ENCODE measurements at regions of chr6 and their contacts with region 1.

Region 1: DNA sequence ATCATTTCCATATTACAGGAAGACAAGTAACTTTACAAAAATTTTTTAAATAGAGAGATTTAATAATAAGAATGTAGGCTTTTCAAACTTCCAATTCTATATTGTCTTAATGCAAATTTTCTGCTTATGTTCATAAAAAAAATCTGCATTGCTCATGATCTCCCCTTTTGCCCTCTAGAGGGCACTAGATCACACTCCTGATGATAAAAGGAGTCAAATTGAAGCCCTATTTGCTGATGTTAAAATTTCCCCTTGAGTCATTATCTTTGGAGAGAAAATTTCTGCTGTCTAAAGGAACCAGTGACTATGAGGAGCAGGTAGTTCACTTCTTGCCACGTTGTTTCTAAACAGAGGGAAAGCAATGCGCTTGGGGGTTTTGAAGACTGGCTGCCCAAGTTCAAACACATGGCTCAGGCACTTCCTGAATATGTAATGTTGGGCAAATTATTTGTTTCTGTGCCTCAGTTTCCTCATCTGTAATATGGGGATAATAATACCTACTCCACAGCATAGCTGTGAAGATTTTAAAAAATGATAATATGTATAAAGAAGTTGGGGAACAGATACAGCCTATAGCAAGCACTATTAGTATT is 874.2 kb downstream of the TFAP2A start:
- DNase-seq: peak; percentile 67
- ATAC-seq: peak; percentile 62
- H3K4me3 ChIP-seq: no peak overlapping the region
- H3K27ac ChIP-seq: no peak overlapping the region
- H3K4me1 ChIP-seq: no peaks in the 10 kb centered on the region
- H3K27me3 ChIP-seq: no peaks in the 10 kb centered on the region
- CTCF ChIP-seq: peak; percentile 66
- POLR2A ChIP-seq: no peak
- RAD21 ChIP-seq: peak; percentile 67

Region 2: DNA sequence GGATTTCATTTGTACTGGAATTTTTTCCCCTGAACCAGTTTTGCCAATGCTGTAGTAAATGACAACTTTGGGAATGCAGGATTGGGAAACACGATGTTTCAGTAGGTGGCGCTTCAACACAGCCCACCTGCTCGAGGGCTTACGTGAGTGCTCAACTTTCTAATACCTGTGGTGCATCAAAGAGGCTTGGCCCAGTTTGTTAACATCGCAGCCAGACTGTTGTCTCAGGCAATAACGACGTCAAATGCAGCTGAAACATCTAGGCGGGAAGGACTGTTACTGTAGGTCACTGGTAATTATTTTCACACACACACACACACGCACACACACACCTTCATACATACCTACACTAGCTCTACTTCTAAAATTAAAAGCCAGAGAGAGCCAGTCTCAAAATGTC is 289.8 kb before region 1 on chr6:
- CTCF ChIA-PET with region 1: no interaction called
- POLR2A ChIA-PET with region 1: no interaction called
- dilution Hi-C with region 1: no loop called
- in situ Hi-C with region 1: no loop called
- intact Hi-C with region 1: loop called (anchors 5 kb)
- DNase-seq: peak; percentile 53
- ATAC-seq: peak; percentile 59
- H3K4me3 ChIP-seq: no peak overlapping the region
- H3K27ac ChIP-seq: no peak overlapping the region
- H3K4me1 ChIP-seq: no peaks in the 10 kb centered on the region
- H3K27me3 ChIP-seq: no peaks in the 10 kb centered on the region
- CTCF ChIP-seq: peak; percentile 55
- POLR2A ChIP-seq: no peak
- RAD21 ChIP-seq: peak; percentile 80

Region 3: DNA sequence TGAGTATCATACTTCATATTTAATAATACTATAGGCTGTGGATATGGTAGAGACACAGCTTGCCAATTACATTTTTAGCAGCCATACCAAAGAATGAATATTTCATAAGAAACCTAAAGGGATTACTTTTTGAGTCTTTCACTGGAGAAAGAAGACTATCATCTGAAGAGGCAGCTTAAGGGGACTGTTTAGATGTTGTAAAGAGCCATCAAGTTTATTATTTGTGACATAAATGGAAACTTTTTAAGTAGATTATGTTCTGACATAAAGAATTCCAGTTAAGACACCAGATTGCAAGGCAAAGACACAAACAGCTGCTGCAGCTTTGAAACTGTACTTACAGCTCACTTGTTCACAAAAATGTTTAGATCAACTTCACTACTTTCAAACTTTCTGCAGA is 444.9 kb after region 1 on chr6:
- CTCF ChIA-PET with region 1: no interaction called
- POLR2A ChIA-PET with region 1: no interaction called
- dilution Hi-C with region 1: no loop called
- in situ Hi-C with region 1: no loop called
- intact Hi-C with region 1: loop called (anchors 10 kb)
- DNase-seq: no peak
- ATAC-seq: no peak
- H3K4me3 ChIP-seq: no peak overlapping the region
- H3K27ac ChIP-seq: no peak overlapping the region
- H3K4me1 ChIP-seq: no peaks in the 10 kb centered on the region
- H3K27me3 ChIP-seq: no peaks in the 10 kb centered on the region
- CTCF ChIP-seq: no peak
- POLR2A ChIP-seq: no peak
- RAD21 ChIP-seq: no peak

Region 4: DNA sequence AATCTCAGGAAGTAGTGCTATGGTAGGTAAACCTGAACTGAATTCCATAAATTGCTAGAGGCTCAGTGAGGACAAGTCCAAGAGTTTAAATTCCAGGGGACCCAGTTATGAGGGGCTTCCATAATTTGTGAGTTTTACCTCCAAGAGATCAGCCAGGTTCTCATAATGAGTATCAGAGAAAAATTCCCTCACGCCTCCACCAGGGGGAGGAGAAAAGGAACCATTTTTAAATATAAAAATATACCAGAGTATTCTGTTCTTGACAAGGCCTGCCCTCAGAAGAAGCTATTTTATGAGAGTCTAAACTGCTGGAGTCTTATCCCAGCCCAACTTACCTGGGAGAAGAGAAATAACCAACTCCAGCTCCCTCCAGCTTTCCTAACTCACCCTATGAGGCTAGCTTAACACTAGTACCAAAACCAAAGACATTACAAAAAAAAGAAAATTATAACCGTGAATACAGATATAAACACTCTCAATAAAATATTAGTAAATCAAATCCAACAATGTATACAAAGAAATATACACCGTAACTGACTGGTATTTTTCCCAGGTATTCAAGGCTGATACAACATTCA is 715.6 kb after region 1 on chr6:
- CTCF ChIA-PET with region 1: no interaction called
- POLR2A ChIA-PET with region 1: no interaction called
- dilution Hi-C with region 1: no loop called
- in situ Hi-C with region 1: no loop called
- intact Hi-C with region 1: loop called (anchors 10 kb)
- DNase-seq: no peak
- ATAC-seq: peak; percentile 46; the same call in 1 of the 2 replicates
- H3K4me3 ChIP-seq: no peak overlapping the region
- H3K27ac ChIP-seq: no peak overlapping the region
- H3K4me1 ChIP-seq: no peaks in the 10 kb centered on the region
- H3K27me3 ChIP-seq: no peaks in the 10 kb centered on the region
- CTCF ChIP-seq: peak; percentile 34
- POLR2A ChIP-seq: no peak
- RAD21 ChIP-seq: no peak

Region 5: DNA sequence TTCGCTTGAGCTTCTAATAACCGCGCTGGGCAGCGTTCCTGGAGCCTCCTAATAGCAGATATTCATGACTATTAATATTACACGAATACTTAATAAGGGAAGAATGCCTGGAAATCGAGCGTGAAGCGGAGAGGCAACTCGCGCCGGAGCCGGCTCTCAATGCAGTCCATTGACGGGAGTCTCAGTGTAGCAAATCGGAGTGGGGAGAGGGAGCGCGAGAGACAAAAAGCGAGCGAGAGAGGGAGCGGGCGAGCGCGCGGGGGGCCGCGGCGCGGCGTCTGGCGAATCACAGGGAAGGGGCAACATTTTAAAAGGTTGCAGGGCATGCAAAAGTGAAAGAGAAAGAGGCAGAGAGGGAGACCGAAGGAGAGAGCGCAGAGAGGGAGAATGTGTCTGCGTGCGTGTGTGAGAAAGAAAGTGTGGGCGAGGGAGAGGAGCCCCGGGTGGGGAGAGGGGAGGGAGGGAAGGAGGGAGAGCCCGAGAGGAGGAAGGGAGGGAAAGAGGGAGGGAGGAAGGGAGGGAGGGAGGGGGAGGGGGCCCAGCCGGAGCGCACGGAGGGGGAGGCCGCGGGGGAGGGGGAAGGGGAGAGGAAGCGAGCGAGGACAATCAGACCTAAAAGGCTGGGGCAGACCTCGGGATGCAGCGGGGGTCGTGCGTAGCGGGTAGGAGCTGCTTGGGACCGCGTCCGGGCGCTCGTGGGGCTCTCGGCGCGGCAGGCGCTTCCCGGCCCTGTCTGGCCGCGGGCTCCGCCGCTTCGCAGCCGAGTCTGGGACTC is 871.5 kb after region 1 on chr6:
- CTCF ChIA-PET with region 1: no interaction called
- POLR2A ChIA-PET with region 1: no interaction called
- dilution Hi-C with region 1: no loop called
- in situ Hi-C with region 1: loop called (anchors 25 kb)
- intact Hi-C with region 1: loop called (anchors 5 kb)
- DNase-seq: peak; percentile 75
- ATAC-seq: peak; percentile 50
- H3K4me3 ChIP-seq: peak overlapping the region; percentile 67
- H3K27ac ChIP-seq: peak overlapping the region; percentile 64
- H3K4me1 ChIP-seq: no peaks in the 10 kb centered on the region; the same call in 1 of the 2 replicates
- H3K27me3 ChIP-seq: peaks cover 74% of the 10 kb centered on the region
- CTCF ChIP-seq: no peak
- POLR2A ChIP-seq: no peak
- RAD21 ChIP-seq: no peak

Measured in IMR-90 (cell line).